CD8-positive, alpha-beta T cell (primary cell): ENCODE measurements at regions of chr15 and their contacts with region 1.

Region 1: DNA sequence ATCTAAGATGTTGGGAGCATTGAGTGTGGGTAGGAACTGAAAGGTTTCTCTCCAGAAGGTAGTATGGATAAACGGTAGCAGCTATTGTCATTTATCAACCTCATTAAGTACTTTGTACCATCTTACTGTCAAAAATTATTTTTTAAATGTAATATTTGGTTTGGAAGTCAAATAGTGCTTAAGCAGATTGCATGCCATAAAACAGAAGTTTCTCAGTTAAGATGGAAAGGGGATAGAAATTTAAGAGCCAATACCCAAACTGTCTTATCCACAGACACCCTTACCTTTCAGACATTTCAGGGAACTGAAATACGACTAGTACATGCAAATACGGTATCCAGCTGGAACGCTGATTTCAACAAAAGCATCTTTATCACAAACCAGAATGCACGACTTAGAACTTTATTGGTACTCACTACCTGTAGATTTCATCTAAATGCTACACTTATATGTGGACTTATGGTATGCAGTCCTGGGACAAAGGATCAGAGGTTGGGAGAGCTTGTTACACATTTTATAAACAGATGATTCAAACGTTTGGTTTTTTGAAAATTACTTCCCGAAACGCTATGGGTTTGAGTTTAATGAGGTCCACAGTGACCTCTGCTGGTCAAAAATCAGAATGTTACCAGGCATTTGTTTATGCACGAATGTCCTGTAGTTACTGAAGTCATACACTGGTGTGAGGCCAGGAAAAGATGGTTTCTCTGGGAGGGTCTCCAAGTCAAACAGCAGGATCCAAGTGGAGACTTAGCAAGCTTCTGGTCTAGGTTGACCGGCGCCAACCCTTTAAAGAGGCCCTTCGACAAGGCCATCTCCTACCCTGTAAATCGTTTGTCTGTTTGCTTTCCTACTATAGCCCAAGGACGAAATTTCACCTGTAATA is 45.7 kb upstream of the DUT start:
- DNase-seq: peak in 6 of 9 experiments; percentile 3 to 66 (median 30)
- ATAC-seq: peak; percentile 51
- H3K4me3 ChIP-seq: no peak overlapping the region
- H3K4me3 Mint-ChIP-seq: no peak overlapping the region
- H3K27ac ChIP-seq: no peak overlapping the region
- H3K27ac Mint-ChIP-seq: no peak overlapping the region
- H3K4me1 ChIP-seq: no peaks in the 10 kb centered on the region
- H3K4me1 Mint-ChIP-seq: peaks cover 9% of the 10 kb centered on the region
- H3K27me3 ChIP-seq: no peaks in the 10 kb centered on the region
- H3K27me3 Mint-ChIP-seq: peaks cover 8% of the 10 kb centered on the region
- CTCF ChIP-seq: peak; percentile 81

Region 2: DNA sequence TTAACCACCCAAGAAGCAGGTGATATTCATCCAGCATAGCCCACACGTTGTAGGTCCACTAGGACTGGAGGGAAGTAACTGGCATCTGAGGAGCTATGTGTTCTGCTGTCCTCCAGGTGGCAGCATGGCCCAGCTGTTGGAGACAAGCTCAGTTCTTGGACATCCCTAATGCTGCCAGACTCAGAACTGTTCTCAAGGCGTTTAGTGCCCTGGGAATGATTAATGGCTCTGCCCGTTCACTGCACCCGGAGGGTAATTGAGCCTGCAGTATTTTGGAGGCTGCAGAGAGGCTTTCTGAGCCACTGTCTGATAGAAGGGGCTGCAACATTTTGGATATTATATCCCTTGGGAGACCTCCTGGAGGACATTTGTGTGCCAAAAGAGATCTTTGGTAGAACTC is 1089.5 kb before region 1 on chr15:
- CTCF ChIA-PET with region 1: interaction called, 5 read pairs
- POLR2A ChIA-PET with region 1: no interaction called
- intact Hi-C with region 1: loop called (anchors 1 to 5 kb)
- DNase-seq: peak in 5 of 9 experiments; percentile 14 to 48 (median 28)
- ATAC-seq: no peak
- H3K4me3 ChIP-seq: no peak overlapping the region
- H3K4me3 Mint-ChIP-seq: no peak overlapping the region
- H3K27ac ChIP-seq: no peak overlapping the region
- H3K27ac Mint-ChIP-seq: no peak overlapping the region
- H3K4me1 ChIP-seq: no peaks in the 10 kb centered on the region
- H3K4me1 Mint-ChIP-seq: no peaks in the 10 kb centered on the region
- H3K27me3 ChIP-seq: no peaks in the 10 kb centered on the region
- H3K27me3 Mint-ChIP-seq: no peaks in the 10 kb centered on the region
- CTCF ChIP-seq: no peak

Region 3: DNA sequence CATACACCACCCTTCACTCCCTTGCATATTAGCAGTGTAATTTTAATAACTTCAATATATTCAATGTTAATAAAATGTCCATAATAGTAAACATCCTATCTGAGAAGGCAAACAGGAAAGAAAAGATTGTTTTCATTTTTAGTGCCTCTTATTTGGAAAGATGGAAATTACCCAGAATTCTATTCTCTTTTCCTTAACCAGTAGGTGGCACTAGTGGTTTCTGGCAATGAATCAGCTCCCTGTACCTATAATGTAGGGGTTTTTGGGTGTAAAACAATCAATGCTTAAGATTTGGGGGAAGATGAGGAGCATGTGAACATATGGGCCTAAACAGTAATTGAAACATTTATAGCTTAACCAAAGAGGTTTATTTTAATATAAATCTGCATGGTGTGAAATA is 573.9 kb before region 1 on chr15:
- CTCF ChIA-PET with region 1: no interaction called
- POLR2A ChIA-PET with region 1: no interaction called
- intact Hi-C with region 1: loop called in 1 of 2 experiments (anchors 5 kb)
- DNase-seq: no peak
- ATAC-seq: no peak
- H3K4me3 ChIP-seq: no peak overlapping the region
- H3K4me3 Mint-ChIP-seq: no peak overlapping the region
- H3K27ac ChIP-seq: no peak overlapping the region
- H3K27ac Mint-ChIP-seq: no peak overlapping the region
- H3K4me1 ChIP-seq: no peaks in the 10 kb centered on the region
- H3K4me1 Mint-ChIP-seq: no peaks in the 10 kb centered on the region
- H3K27me3 ChIP-seq: no peaks in the 10 kb centered on the region
- H3K27me3 Mint-ChIP-seq: peaks cover 21% of the 10 kb centered on the region
- CTCF ChIP-seq: no peak

Region 4: DNA sequence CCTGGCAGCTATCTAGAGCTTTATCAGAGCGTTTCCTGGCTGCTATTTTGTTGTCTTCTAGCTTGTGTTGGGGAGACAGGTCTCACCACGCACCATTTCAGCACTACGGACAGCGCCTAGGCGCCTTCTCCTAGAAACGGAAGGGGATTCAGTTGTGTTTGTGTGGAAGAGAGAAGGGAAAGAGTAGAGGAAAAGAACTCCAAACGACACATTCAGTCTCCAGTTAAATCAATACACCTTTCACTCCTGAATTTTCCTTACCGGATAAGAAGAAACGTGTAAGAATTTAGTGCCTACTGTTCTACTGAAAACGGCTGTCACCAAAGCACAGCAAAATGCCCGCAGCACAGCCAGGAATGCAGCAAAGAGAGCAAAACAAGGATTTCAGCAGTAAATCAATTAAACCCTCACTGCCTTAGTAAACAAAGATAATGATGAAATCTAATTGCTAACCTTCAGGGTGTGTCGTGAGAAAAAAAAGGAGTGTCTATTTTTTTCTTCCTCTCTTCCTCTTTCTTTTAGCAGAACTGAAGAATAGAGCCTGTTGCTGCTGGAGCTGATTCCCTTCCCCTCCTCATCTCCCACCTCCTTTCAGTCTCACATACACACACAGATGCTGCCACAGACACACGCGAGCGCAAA is 94.5 kb before region 1 on chr15:
- CTCF ChIA-PET with region 1: no interaction called
- POLR2A ChIA-PET with region 1: no interaction called
- intact Hi-C with region 1: no loop called
- DNase-seq: peak in 6 of 9 experiments; percentile 3 to 44 (median 24)
- ATAC-seq: no peak
- H3K4me3 ChIP-seq: no peak overlapping the region
- H3K4me3 Mint-ChIP-seq: no peak overlapping the region
- H3K27ac ChIP-seq: no peak overlapping the region
- H3K27ac Mint-ChIP-seq: no peak overlapping the region
- H3K4me1 ChIP-seq: no peaks in the 10 kb centered on the region
- H3K4me1 Mint-ChIP-seq: peaks cover 2% of the 10 kb centered on the region
- H3K27me3 ChIP-seq: no peaks in the 10 kb centered on the region
- H3K27me3 Mint-ChIP-seq: peaks cover 30% of the 10 kb centered on the region
- CTCF ChIP-seq: no peak

Region 5: GRCh38 chr15:48266024-48266689 is 19.4 kb before region 1 on chr15:
- CTCF ChIA-PET with region 1: interaction called, 20 read pairs
- POLR2A ChIA-PET with region 1: no interaction called
- intact Hi-C with region 1: no loop called
- DNase-seq: no peak
- ATAC-seq: no peak
- H3K4me3 ChIP-seq: no peak overlapping the region
- H3K4me3 Mint-ChIP-seq: no peak overlapping the region
- H3K27ac ChIP-seq: no peak overlapping the region
- H3K27ac Mint-ChIP-seq: no peak overlapping the region
- H3K4me1 ChIP-seq: no peaks in the 10 kb centered on the region
- H3K4me1 Mint-ChIP-seq: peaks cover 9% of the 10 kb centered on the region
- H3K27me3 ChIP-seq: no peaks in the 10 kb centered on the region
- H3K27me3 Mint-ChIP-seq: peaks cover 14% of the 10 kb centered on the region
- CTCF ChIP-seq: no peak